Activated CD8-positive, alpha-beta T cell treated with anti-CD3 and anti-CD28 coated beads, Interleukin-2, amount 10 ng/mL, durations not matched to agents 7 days and 5 days (primary cell): ENCODE measurements at regions of chr3 and their contacts with region 1.

Region 1: DNA sequence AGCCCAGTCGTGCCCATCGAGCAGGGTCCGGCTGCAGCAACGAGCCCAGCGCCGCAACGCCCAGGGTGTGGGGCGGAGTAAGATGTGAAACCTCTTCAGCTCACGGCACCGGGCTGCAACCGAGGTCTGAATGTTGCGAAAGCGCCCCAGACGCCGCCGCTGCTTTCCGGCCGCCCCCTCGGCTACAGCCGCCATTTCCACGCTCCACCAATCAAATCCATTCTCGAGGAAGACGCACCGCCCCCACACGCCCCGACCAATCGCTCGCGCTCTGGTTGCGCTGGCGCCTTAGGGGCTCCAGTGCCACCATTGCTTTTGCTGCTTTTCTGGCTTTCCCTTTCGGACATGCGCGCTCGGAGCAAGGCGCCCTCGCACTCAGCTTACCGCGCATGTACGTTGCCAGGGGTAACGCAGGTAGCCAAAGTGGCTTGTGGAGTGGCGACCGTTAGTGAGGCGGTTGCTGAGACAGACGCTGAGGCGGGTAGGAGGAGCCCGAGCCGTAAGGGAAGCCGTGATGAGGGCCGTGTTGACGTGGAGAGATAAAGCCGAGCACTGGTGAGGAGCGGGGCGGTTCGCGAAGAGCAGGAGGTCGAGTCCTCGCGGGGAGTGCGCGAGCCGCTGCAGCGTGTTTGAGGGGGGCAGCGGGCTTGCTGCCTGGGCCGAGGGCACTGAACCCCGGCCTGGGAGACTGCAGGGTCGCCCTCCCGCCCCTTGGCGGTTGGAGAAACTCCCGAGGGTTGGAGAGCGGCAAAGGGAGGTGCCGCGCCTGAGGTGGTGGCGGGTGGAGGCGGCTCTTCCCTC is at the starts of genes IFT122 and MBD4:
- DNase-seq: peak; percentile 100
- ATAC-seq: peak; percentile 92
- H3K4me3 Mint-ChIP-seq: peak within 1 kb of the TSS; percentile 98
- H3K27ac Mint-ChIP-seq: peak within 1 kb of the TSS; percentile 91
- H3K4me1 Mint-ChIP-seq: peaks cover 62% of the 10 kb centered on the region
- H3K27me3 Mint-ChIP-seq: no peaks in the 10 kb centered on the region
- total RNA-seq, gene IFT122: 22.3 to 25.6 TPM
- total RNA-seq, gene MBD4: 50.1 to 50.6 TPM

Region 2: GRCh38 chr3:129428376-129429079 is 11.5 kb before region 1 on chr3 and contains the start of gene EFCAB12:
- CTCF ChIA-PET with region 1: interaction called, 8 read pairs
- POLR2A ChIA-PET with region 1: interaction called, 51 read pairs
- DNase-seq: peak; percentile 86
- ATAC-seq: peak; percentile 89
- H3K4me3 Mint-ChIP-seq: peak within 1 kb of the TSS; percentile 35
- H3K27ac Mint-ChIP-seq: no peak within 1 kb of the TSS
- H3K4me1 Mint-ChIP-seq: peaks cover 64% of the 10 kb centered on the region
- H3K27me3 Mint-ChIP-seq: peaks cover 9% of the 10 kb centered on the region
- total RNA-seq, gene EFCAB12: 0.42 to 0.45 TPM

Region 3: DNA sequence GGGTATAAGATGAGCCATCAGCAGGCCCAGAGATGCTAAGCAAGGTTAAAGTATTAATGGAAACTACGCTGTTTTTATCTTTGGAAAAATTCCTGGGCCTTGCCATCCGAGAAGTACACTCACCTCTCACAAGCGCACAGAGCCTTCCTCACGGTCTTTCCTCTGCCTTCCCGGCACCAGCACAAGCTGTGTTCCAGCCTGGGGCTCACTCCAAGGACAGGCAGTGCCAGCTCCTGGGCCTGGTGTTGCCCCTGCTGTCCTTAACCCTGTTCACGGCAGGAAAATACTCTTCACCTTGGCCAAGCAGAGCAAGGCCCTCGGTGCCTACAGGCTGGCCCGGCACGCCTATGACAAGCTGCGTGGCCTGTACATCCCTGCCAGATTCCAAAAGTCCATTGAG is 74.1 kb after region 1 on chr3:
- CTCF ChIA-PET with region 1: no interaction called
- POLR2A ChIA-PET with region 1: no interaction called
- DNase-seq: no peak
- ATAC-seq: no peak
- H3K4me3 Mint-ChIP-seq: no peak overlapping the region
- H3K27ac Mint-ChIP-seq: no peak overlapping the region
- H3K4me1 Mint-ChIP-seq: peaks cover 16% of the 10 kb centered on the region
- H3K27me3 Mint-ChIP-seq: no peaks in the 10 kb centered on the region